MCF 10A (cell line): ENCODE measurements at regions of chr2 and their contacts with region 1.

Region 1: DNA sequence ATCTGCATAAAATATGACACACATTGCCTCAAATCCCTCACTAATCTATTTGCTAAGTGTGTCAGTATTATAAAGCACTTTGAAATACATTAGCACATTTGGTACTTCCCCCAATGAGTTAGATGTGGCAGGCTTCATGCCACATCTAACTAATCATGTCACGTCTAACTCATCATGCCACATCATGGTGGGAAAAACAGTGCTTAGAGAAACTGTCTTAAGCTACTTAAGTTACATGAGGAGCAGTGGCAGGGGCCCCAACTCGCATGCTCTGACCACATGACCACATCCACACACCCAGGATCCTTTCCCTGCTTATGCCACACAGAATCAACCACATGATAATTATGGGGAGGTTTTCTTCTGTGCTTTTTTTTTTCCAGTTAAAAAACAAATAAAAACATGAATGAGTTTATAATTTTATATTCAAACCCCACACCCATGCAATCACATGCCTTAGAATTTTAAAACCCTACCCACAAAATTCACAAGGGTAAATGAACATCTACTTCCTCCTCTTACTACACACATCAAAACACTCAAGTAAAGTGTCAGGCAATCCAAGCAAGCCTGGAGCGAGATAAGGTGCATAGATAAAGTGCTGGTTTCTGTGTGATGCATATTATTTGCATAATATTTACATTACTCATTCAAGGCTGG is 1.6 kb downstream of the ABCA12 start:
- DNase-seq: peak; percentile 65
- H3K4me3 Mint-ChIP-seq: peak overlapping the region; percentile 80
- H3K27ac Mint-ChIP-seq: peak overlapping the region; percentile 82
- H3K4me1 Mint-ChIP-seq: peaks cover 48% of the 10 kb centered on the region
- H3K27me3 Mint-ChIP-seq: no peaks in the 10 kb centered on the region
- CTCF ChIP-seq: no peak

Region 2: GRCh38 chr2:214960677-214961076 is 176.1 kb before region 1 on chr2:
- CTCF ChIA-PET with region 1: no interaction called
- POLR2A ChIA-PET with region 1: no interaction called
- intact Hi-C with region 1: no loop called
- DNase-seq: peak; percentile 13
- H3K4me3 Mint-ChIP-seq: no peak overlapping the region
- H3K27ac Mint-ChIP-seq: no peak overlapping the region
- H3K4me1 Mint-ChIP-seq: no peaks in the 10 kb centered on the region
- H3K27me3 Mint-ChIP-seq: no peaks in the 10 kb centered on the region
- CTCF ChIP-seq: peak; percentile 24

Region 3: DNA sequence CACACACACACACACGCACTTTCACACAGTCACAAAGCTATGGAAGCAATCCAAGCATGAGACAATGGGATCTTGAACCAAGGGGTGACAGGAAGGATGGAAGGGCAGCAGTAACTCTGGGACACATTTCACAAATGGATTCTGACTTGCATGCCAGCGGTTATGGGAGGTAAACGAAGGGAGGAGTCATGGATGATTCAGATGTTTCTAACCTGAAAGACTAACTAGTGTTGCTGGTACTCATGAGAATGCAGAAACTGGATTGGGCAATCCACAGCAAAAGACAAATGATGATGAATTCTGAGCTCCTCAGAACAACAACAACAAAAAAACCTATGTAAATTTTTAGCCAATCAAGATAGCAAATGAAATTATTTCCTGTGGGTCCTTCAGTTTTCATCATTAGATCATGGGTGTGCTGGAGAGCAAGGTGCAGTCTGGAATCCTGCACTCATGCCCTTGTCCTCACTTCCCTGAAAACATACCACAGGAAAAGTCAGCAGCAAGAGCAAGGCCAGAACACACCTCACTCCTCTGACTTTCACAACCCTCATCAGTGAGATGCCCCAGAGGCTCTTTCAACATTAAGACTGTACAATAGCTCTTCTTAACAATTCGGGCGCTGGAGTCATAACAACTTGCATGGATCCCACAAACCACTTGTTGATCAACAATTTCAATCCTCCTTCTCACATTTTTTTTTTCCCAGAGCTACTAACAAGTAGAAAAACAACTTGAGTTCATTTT is 31.0 kb before region 1 on chr2:
- CTCF ChIA-PET with region 1: interaction called, 4 read pairs
- POLR2A ChIA-PET with region 1: interaction called, 207 read pairs
- intact Hi-C with region 1: loop called (anchors 1 kb)
- DNase-seq: peak; percentile 93
- H3K4me3 Mint-ChIP-seq: peak overlapping the region; percentile 30
- H3K27ac Mint-ChIP-seq: peak overlapping the region; percentile 84
- H3K4me1 Mint-ChIP-seq: peaks cover 41% of the 10 kb centered on the region
- H3K27me3 Mint-ChIP-seq: no peaks in the 10 kb centered on the region
- CTCF ChIP-seq: no peak

Region 4: DNA sequence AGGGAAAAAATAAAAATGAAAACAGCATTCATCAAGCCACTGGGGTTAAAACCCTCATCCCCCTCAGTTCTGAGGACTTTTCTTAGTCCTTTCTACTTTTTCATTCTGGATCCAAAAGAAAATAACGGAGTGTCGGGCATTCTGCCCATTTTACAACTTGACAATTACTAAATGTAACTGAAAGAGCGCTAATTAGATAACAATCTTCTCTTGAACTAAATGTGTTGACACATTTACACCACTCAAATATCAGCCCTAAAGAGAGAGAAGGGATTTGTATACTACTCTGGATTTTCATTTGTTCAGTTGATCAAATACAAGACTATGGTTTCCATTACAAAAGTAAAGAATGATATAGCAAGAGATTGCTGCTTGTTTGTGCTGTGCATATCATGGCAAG is 25.9 kb before region 1 on chr2:
- CTCF ChIA-PET with region 1: interaction called, 4 read pairs
- POLR2A ChIA-PET with region 1: interaction called, 207 read pairs
- intact Hi-C with region 1: no loop called
- DNase-seq: no peak
- H3K4me3 Mint-ChIP-seq: no peak overlapping the region
- H3K27ac Mint-ChIP-seq: no peak overlapping the region
- H3K4me1 Mint-ChIP-seq: peaks cover 17% of the 10 kb centered on the region
- H3K27me3 Mint-ChIP-seq: no peaks in the 10 kb centered on the region
- CTCF ChIP-seq: no peak

Region 5: DNA sequence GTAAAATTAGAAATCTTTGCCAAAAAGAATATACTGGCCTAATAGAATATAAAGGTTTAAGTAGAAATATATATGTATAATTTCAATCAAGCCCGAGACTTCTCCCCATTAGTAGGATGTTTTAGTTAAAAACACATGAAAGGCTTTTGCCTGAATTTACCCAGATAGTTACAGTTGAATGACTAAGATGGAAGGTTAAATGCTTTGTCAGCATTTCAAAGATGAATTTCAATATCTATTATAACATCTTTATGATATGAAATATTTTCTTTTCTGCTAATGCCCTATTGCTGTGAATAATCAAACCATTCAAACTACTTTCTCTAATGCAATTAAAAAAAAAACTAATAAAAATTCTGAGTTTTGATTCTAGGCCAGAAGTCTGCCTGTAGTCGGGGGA is 19.7 kb after region 1 on chr2:
- CTCF ChIA-PET with region 1: no interaction called
- POLR2A ChIA-PET with region 1: no interaction called
- intact Hi-C with region 1: no loop called
- DNase-seq: no peak
- H3K4me3 Mint-ChIP-seq: no peak overlapping the region
- H3K27ac Mint-ChIP-seq: no peak overlapping the region
- H3K4me1 Mint-ChIP-seq: no peaks in the 10 kb centered on the region
- H3K27me3 Mint-ChIP-seq: no peaks in the 10 kb centered on the region
- CTCF ChIP-seq: no peak

Region 6: DNA sequence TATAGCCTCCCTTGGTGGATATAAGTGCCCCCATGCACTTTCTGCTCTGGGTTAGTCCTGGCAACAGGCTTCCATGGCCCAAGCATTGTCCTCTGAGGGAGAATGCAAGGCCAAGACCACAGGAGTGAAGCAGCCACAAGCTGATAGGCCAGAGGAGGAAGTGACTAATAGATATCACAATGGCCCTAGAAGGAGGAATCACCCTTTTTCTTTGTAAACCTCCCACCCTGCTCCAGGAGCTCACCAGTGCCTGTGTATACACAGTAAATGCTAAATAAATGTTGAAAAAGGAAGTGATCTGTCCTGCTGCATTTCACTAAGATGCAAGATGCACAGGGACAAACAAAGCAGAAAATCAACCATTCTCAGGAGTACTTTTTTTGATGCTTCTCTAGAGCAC is 51.3 kb after region 1 on chr2:
- CTCF ChIA-PET with region 1: interaction called, 4 read pairs
- POLR2A ChIA-PET with region 1: interaction called, 26 read pairs
- intact Hi-C with region 1: no loop called
- DNase-seq: no peak
- H3K4me3 Mint-ChIP-seq: no peak overlapping the region
- H3K27ac Mint-ChIP-seq: no peak overlapping the region
- H3K4me1 Mint-ChIP-seq: peaks cover 11% of the 10 kb centered on the region
- H3K27me3 Mint-ChIP-seq: no peaks in the 10 kb centered on the region
- CTCF ChIP-seq: no peak

Region 7: GRCh38 chr2:215311625-215312396 is 175.0 kb after region 1 on chr2 and contains the start of gene ATIC:
- CTCF ChIA-PET with region 1: no interaction called
- POLR2A ChIA-PET with region 1: interaction called, 12 read pairs
- intact Hi-C with region 1: no loop called
- DNase-seq: peak; percentile 97
- H3K4me3 Mint-ChIP-seq: peak within 1 kb of the TSS; percentile 83
- H3K27ac Mint-ChIP-seq: peak within 1 kb of the TSS; percentile 88
- H3K4me1 Mint-ChIP-seq: peaks cover 13% of the 10 kb centered on the region
- H3K27me3 Mint-ChIP-seq: no peaks in the 10 kb centered on the region
- CTCF ChIP-seq: no peak
- total RNA-seq, gene ATIC: 216 and 297 TPM in 2 replicates